Left ventricle myocardium inferior (tissue), 1 donor: ENCODE measurements at regions of chr11 and their contacts with region 1.

Region 1: DNA sequence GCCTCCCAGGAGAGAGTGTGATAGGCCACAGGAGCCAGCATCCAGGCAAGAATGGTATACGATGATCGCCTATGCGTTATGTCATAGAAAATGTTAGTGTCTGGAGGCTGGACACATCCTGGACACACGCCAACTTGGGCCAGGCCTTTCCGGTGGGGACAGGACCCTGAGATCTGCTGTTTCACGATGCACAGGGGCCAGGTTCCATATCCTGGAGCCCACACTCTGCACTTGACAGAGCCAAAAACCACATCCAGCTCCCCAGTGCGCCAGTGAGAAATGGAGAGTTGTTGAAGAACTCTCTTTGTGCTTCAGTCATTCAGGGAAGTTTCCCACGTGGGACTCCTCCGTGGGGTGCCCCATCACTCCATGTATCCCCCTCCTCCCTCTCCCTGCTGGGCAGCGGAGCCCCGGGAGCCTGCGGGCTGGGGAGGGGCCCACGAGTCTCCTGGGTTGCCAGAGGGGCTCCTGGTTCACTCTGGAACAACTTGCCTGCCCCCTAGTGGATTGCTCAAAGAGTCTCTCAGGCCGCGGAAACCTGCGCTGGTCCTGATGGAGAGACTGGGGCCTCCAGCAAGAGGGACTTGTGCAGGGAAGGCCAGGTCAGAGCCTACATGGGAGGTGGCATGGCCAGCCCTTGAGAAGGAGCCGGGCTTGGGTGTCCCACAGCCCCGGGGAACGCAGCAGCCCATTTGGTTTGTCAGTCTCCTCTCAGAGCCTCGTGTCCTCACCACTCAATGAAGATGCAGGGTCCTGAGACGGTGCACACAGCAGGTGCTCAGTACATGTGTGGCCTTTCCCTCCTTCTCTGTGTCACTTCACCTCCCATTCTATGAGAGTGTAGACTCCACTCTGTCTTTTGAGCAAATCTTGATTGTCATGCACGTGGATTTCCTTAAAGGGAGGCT is 10.2 kb upstream of the LRRC32 start:
- DNase-seq: peak; percentile 48
- H3K4me3 ChIP-seq: no peak overlapping the region
- H3K27ac ChIP-seq: no peak overlapping the region
- H3K4me1 ChIP-seq: peaks cover 20% of the 10 kb centered on the region
- H3K27me3 ChIP-seq: no peaks in the 10 kb centered on the region
- CTCF ChIP-seq: peak; percentile 96

Region 2: DNA sequence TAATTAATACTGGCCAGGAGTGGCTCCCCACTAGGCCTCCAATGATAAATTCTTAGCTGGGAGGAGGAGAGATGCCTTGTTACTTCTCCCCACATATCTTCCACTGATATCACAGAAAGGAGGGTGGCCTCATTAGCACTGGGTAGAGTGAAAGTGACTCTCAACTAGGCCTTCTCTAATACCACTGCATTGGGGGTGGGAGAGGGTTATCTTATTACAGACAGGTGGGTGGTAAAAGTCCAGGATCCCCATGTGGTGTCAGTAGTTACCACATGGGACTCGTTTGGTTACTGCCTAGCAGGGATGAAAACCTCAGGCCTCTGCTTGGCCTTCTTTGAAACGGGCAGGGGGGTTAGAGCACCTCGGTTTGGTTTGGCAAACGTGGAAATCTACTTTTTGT is 698.5 kb before region 1 on chr11:
- intact Hi-C with region 1: no loop called
- DNase-seq: no peak
- H3K4me3 ChIP-seq: no peak overlapping the region
- H3K27ac ChIP-seq: no peak overlapping the region
- H3K4me1 ChIP-seq: peaks cover 11% of the 10 kb centered on the region
- H3K27me3 ChIP-seq: no peaks in the 10 kb centered on the region
- CTCF ChIP-seq: no peak

Region 3: DNA sequence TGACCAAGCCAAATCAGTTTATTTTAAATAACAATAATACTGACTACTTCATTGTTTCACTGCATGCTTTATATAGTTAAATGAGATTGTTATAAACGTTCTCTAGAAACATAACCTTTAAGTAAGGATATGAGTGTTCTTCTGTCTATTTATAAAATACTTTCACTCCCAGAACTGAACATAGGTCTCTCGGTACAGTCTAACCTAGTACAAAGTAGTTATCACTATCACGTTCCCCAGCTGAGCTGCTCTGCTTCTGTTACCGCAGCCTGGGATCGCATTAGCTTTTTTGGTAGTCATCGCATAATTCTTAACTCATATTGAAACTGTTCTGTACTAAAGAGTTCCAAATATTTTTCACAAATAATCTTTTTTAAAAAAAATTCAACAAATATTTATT is 618.0 kb before region 1 on chr11:
- intact Hi-C with region 1: no loop called
- DNase-seq: no peak
- H3K4me3 ChIP-seq: peak overlapping the region; percentile 9
- H3K27ac ChIP-seq: peak overlapping the region; percentile 43
- H3K4me1 ChIP-seq: peaks cover 15% of the 10 kb centered on the region
- H3K27me3 ChIP-seq: no peaks in the 10 kb centered on the region
- CTCF ChIP-seq: no peak

Region 4: GRCh38 chr11:76554767-76555166 is 126.0 kb before region 1 on chr11:
- intact Hi-C with region 1: loop called (anchors 5 kb)
- DNase-seq: no peak
- H3K4me3 ChIP-seq: no peak overlapping the region
- H3K27ac ChIP-seq: no peak overlapping the region
- H3K4me1 ChIP-seq: peaks cover 7% of the 10 kb centered on the region
- H3K27me3 ChIP-seq: no peaks in the 10 kb centered on the region
- CTCF ChIP-seq: no peak

Region 5: GRCh38 chr11:76598426-76598839 is 82.3 kb before region 1 on chr11:
- intact Hi-C with region 1: loop called (anchors 5 kb)
- DNase-seq: no peak
- H3K4me3 ChIP-seq: no peak overlapping the region
- H3K27ac ChIP-seq: peak overlapping the region; percentile 60
- H3K4me1 ChIP-seq: peaks cover 36% of the 10 kb centered on the region
- H3K27me3 ChIP-seq: no peaks in the 10 kb centered on the region
- CTCF ChIP-seq: peak; percentile 71